Lower leg skin (tissue), 4 donors: ENCODE measurements at regions of chr11 and their contacts with region 1.

Region 1: GRCh38 chr11:3037040-3037944 is 19.9 kb downstream of the CARS1 start:
- DNase-seq: peak; percentile 74 to 93
- H3K4me3 ChIP-seq: no peak overlapping the region
- CTCF ChIP-seq: no peak
- POLR2A ChIP-seq: no peak

Region 2: GRCh38 chr11:3091791-3092602 is 54.7 kb after region 1 on chr11:
- intact Hi-C with region 1: loop called (anchors 5 kb)
- DNase-seq: peak in 1 of 2 donors; percentile 92
- H3K4me3 ChIP-seq: no peak overlapping the region
- CTCF ChIP-seq: peak in 2 of 3 donors; percentile 54 to 75
- POLR2A ChIP-seq: no peak

Region 3: DNA sequence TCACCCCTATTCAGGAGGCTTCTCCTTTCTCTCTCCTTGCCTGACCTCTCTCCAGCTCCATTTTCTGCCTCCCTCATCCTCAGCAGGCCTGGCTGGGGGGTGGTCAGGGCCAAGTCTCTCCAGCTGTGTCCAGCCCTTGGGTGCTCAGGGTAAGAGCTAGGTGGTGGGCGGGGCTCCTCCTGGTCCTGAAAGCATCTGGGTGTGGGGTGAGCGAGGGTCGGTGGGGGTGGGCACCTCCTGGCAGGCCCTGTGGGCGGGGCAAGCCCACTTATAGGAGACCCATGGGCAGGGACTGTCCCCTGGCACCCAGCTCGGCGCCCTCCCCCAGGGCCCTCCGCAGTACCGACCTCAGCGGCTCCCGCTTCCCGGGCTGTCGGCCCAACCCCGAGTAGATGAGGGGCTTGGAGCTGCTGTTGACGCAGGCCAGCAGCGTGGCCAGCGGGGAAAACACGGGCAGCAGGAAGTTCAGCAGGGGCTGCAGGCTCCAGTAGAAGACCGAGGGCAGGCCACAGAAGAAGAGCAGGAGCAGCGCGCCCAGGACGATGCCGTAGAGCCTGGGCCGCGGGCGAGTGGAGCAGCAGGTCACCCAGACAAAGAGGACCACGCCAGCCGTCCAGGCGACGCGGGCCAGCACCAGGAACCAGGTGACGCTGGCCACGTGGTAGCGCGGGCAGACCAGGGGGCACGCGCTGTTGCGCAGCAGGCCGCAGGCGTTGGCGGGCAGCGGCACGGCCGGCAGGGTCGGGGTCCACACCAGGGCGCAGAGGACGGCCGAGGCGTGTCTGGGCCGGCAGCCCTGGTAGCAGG is 180.6 kb after region 1 on chr11:
- intact Hi-C with region 1: loop called (anchors 5 kb)
- DNase-seq: peak in 1 of 2 donors; percentile 78
- H3K4me3 ChIP-seq: no peak overlapping the region
- CTCF ChIP-seq: no peak
- POLR2A ChIP-seq: no peak

Region 4: DNA sequence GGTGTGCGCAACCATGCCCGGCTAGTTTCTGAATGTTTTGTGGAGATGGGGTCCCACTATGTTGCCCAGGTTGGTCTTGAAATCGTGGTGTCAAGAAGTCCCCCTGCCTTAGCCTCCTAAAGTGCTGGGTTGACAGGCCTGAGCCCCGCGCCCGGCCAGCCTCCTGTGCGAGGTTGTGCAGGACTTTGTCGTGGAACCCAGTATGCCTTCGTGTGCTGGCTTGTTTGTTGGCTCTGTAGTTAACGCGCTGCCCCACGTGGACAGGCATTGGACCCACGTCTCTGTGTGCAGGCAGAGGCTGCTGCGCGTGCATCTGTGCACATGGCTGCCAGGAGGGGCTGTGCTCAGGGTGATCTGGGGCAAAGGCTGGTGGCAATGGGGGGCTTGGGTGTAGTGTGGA is 375.5 kb after region 1 on chr11:
- intact Hi-C with region 1: no loop called
- DNase-seq: no peak
- H3K4me3 ChIP-seq: no peak overlapping the region
- CTCF ChIP-seq: no peak
- POLR2A ChIP-seq: no peak